OCI-LY7 (cell line): ENCODE measurements at regions of chr4 and their contacts with region 1.

Region 1: GRCh38 chr4:138935-139334 is 14.6 kb downstream of the ZNF718 start:
- DNase-seq: no peak
- H3K4me3 ChIP-seq: no peak overlapping the region
- H3K27ac ChIP-seq: no peak overlapping the region
- H3K4me1 ChIP-seq: no peaks in the 10 kb centered on the region
- CTCF ChIP-seq: no peak

Region 2: DNA sequence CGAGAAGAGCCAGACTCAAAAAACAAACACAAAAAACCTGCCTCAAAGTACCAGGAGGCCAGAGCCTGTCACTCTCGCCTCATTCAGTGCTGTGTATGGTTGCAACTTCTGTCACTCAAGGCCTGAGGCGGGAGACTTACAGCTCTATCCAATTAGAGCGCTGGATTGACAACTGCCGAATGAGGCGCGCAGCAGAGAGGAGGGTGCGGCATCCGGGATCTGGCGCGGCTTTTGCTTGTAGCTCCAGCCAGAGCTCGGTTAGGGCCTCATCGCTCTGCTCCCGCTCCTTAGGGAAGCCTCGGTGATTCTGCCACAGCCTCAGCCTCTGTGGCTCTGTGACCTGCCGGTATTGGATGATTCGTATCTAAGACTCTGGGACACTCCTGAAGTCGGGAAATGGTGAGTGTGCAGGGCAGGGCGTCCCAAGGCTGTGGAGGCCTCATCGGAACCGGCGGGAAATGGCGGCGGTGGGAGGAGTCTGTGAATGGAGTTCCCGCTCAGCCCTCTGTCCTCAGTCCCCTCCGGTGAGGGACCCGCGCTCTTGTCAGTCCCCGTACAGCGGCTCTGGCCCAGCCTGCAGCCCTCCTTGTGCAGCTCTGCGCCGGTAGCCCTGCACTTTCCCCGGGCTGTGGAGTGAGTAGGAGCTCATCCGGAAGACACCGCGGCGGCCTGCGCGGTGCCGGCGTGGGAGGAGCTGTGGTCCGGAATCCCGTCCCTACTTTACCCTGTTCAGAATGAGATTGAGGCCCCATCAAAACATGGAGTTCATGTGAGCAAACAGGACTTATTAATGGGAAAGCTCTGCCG is 14.5 kb before region 1 on chr4 and contains the start of gene ZNF718:
- CTCF ChIA-PET with region 1: no interaction called
- POLR2A ChIA-PET with region 1: interaction called, 4 read pairs
- intact Hi-C with region 1: loop called (anchors 1 kb)
- DNase-seq: peak; percentile 93
- H3K4me3 ChIP-seq: peak within 1 kb of the TSS; percentile 81
- H3K27ac ChIP-seq: peak within 1 kb of the TSS; percentile 71
- H3K4me1 ChIP-seq: peaks cover 6% of the 10 kb centered on the region
- CTCF ChIP-seq: no peak
- total RNA-seq, gene ZNF718: 18.7 and 22.9 TPM in 2 replicates

Region 3: GRCh38 chr4:646460-646859 is 507.5 kb after region 1 on chr4:
- CTCF ChIA-PET with region 1: no interaction called
- POLR2A ChIA-PET with region 1: interaction called, 10 read pairs
- intact Hi-C with region 1: no loop called
- DNase-seq: no peak
- H3K4me3 ChIP-seq: no peak overlapping the region
- H3K27ac ChIP-seq: no peak overlapping the region
- H3K4me1 ChIP-seq: no peaks in the 10 kb centered on the region
- CTCF ChIP-seq: no peak

Region 4: DNA sequence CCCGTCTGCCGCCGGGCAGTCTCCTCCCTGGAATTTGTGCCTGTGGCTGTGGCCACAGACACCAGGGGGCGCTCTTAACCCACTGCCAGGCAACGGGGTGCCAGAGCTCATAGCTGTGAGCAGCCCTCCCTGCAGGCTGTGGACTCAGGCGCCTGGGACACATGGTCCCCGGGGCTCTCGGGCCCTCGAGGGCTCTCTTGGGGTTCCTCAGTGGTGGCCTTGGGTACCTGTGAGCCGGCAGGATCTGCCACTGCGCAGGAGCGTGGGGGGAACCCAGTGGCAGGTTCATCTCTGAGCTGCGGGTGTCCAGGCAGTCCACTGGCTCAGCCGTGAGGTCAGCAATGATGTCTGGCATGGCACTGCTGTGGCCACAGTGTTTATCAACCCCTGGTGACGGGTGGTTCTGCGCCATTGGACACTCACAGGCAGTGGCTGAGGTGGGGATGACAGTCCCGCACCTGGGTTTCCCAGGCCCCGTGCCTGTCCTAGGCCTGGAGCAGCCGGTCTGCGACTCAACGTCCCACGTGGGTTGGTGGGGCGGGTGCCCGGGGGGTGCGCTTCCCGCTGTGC is 603.9 kb after region 1 on chr4:
- CTCF ChIA-PET with region 1: no interaction called
- POLR2A ChIA-PET with region 1: no interaction called
- intact Hi-C with region 1: no loop called
- DNase-seq: peak; percentile 74
- H3K4me3 ChIP-seq: no peak overlapping the region
- H3K27ac ChIP-seq: no peak overlapping the region
- H3K4me1 ChIP-seq: peaks cover 10% of the 10 kb centered on the region
- CTCF ChIP-seq: peak; percentile 96